Activated CD8-positive, alpha-beta T cell treated with anti-CD3 and anti-CD28 coated beads, Interleukin-2, amount 10 ng/mL, durations not matched to agents 7 days and 5 days (primary cell): ENCODE measurements at regions of chr17 and their contacts with region 1.

Region 1: DNA sequence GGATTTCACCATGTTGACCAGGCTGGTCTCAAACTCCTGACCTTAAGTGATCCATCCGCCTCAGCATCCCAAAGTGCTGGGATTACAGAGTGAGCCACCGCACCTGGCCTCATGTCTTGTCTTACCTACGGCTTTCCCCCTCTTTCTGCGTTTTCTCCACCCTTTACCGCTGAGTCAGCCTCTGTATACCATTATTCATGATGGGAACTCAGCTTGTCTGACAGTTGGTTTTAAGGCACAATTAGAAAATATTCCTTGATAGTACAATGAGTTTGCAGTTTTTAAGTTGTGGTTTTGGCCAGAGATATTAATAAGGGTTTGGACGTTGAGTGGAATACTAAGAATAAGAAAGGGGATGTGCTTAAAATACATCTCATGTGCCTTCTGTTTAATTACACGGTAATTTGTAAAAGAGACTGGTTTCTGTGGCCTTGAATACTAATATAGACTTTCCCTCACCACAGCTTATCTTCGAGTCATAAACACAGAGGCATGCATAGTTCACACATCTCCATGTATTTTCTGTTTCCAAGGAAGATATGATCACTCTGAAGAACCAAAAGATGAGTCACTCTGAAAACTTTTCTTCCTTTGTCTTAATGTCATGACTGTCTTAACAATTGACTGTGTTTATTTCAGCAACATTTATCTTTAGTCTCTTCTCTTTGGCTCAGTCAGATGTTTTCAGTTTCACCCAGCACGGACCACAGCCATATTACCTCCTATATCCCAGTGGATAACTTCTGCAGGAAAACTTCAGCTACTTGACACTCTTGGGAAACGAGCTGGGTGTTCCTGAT is 54.4 kb downstream of the PITPNC1 start:
- DNase-seq: no peak
- ATAC-seq: peak; percentile 31
- H3K4me3 Mint-ChIP-seq: peak overlapping the region; percentile 20
- H3K27ac Mint-ChIP-seq: peak overlapping the region; percentile 39
- H3K4me1 Mint-ChIP-seq: peaks cover 73% of the 10 kb centered on the region
- H3K27me3 Mint-ChIP-seq: no peaks in the 10 kb centered on the region

Region 2: DNA sequence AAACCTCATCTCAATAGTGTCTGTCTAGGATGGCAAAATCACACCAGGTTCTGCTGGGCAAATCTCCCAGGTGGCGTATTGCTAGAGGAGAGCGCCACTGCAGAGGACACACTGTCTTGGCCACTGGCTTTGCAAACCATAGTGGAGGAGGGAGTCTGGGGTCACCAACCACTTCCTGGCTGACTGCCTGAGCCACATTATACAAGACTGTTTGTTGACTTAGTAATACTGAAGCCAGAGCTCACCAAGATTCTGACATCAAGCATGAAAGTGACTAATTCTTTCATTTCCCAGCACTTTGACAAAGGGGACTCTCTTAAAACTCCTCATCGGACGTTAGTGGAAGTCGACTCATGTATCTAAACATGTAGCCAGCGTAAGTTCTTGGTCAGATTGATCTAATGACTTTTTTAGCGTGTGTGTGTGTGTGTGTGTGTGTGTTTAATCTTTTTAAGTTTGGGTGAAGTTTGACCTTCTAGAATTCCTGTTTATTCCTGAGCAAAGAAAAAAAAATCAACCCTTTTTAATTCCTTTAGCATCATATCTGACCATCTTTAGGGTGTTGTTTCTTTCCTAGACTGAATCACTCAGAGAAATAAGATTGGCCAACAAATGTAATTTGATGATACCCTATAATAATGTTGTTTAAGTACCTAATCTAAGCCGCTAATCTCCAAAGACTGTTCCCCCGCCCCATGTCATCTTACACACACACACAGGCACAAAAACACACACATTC is 40.6 kb before region 1 on chr17:
- CTCF ChIA-PET with region 1: interaction called, 16 read pairs
- POLR2A ChIA-PET with region 1: interaction called, 4 read pairs
- DNase-seq: peak; percentile 82
- ATAC-seq: peak; percentile 91
- H3K4me3 Mint-ChIP-seq: peak overlapping the region; percentile 71
- H3K27ac Mint-ChIP-seq: peak overlapping the region; percentile 93
- H3K4me1 Mint-ChIP-seq: peaks cover 69% of the 10 kb centered on the region
- H3K27me3 Mint-ChIP-seq: no peaks in the 10 kb centered on the region

Region 3: DNA sequence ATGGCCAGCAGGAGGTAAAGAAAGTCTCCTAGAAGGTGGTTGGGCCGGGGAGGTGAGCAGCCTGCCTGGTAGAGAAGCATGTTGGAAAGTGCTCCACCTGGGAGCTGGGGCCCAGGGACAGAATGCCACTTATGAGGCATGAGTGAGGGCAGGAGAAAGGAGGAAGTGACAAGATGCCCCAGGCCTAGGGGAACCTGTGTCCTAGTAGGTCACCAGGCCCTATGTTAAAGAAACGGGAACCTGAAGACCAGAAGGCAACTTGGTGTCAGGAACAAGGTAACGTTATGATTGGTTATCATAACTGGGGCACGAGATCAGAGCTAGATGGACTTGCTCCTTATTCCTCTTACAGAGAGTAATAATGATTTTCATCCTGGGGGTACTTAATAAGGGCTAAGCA is 20.1 kb before region 1 on chr17:
- CTCF ChIA-PET with region 1: no interaction called
- POLR2A ChIA-PET with region 1: no interaction called
- DNase-seq: no peak
- ATAC-seq: no peak
- H3K4me3 Mint-ChIP-seq: no peak overlapping the region
- H3K27ac Mint-ChIP-seq: no peak overlapping the region
- H3K4me1 Mint-ChIP-seq: peaks cover 25% of the 10 kb centered on the region
- H3K27me3 Mint-ChIP-seq: no peaks in the 10 kb centered on the region

Region 4: DNA sequence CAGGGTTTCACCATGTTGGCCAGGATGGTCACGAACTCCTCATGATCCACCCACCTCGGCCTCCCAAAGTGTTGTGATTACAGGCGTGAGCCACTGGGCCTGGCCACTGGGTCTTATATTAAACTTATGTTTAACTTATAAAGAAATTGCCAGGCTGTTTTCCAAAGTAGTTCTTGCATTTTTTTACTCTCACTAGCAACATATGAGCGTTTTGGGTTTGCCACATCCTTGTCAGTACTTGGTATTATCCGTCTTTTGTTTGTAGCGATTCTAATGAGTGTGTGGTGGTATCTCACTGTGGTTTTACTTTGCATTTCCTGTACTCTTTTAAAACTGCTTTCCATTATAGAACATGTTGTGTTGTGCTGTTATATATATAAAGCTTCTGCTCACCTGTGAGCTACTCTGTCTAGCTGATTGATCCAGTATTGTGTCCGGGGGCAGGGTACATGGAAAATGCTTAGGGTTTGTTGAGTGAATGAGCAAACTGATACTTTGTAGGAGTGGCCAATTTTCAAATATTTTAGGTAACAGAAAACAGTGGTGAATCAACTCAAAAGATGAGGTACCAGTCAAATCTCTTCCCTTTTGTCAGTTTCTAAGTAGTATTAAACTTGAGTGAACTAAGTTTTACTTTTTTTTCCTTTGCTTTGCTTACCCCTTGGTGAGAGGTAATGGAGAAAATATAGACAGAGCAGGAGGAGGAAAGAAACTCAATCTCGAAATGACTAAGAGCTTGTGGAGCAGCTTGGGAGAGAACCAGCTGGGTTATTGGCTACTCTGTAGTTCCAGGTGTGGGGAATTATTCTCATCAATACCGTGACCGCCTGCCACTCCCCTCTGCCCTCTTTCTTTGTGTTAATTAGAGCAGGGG is 21.5 kb after region 1 on chr17:
- CTCF ChIA-PET with region 1: interaction called, 3 read pairs
- POLR2A ChIA-PET with region 1: interaction called, 190 read pairs
- DNase-seq: peak; percentile 68
- ATAC-seq: peak; percentile 84
- H3K4me3 Mint-ChIP-seq: peak overlapping the region; percentile 67
- H3K27ac Mint-ChIP-seq: peak overlapping the region; percentile 96
- H3K4me1 Mint-ChIP-seq: peaks cover 88% of the 10 kb centered on the region
- H3K27me3 Mint-ChIP-seq: no peaks in the 10 kb centered on the region

Region 5: DNA sequence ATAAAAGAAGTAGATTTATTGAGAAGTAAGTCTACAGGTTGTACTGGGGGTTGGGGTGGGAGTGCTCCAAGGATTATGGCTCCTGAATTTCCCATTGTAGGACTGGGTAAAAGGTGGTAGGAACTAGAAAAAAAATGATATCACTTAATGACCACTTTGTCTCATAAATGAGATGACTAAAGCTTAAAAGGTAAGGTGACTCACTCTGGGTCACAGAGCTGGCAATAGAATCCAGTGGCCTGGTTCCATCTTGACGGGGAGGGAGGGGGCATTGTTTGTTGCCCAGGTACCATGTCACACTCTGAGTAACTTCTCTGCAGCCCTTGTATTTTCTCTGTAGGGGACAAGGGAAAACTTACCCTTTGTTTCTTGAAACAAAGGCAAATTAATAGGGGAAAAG is 71.7 kb after region 1 on chr17:
- CTCF ChIA-PET with region 1: no interaction called
- POLR2A ChIA-PET with region 1: no interaction called
- DNase-seq: no peak
- ATAC-seq: no peak
- H3K4me3 Mint-ChIP-seq: no peak overlapping the region
- H3K27ac Mint-ChIP-seq: no peak overlapping the region
- H3K4me1 Mint-ChIP-seq: peaks cover 36% of the 10 kb centered on the region
- H3K27me3 Mint-ChIP-seq: no peaks in the 10 kb centered on the region

Region 6: GRCh38 chr17:67671492-67671891 is 240.0 kb after region 1 on chr17:
- CTCF ChIA-PET with region 1: no interaction called
- POLR2A ChIA-PET with region 1: no interaction called
- DNase-seq: no peak
- ATAC-seq: no peak
- H3K4me3 Mint-ChIP-seq: no peak overlapping the region
- H3K27ac Mint-ChIP-seq: no peak overlapping the region
- H3K4me1 Mint-ChIP-seq: no peaks in the 10 kb centered on the region
- H3K27me3 Mint-ChIP-seq: no peaks in the 10 kb centered on the region